Brain microvascular endothelial cell (primary cell): ENCODE measurements at regions of chr2 and their contacts with region 1.

Region 1: DNA sequence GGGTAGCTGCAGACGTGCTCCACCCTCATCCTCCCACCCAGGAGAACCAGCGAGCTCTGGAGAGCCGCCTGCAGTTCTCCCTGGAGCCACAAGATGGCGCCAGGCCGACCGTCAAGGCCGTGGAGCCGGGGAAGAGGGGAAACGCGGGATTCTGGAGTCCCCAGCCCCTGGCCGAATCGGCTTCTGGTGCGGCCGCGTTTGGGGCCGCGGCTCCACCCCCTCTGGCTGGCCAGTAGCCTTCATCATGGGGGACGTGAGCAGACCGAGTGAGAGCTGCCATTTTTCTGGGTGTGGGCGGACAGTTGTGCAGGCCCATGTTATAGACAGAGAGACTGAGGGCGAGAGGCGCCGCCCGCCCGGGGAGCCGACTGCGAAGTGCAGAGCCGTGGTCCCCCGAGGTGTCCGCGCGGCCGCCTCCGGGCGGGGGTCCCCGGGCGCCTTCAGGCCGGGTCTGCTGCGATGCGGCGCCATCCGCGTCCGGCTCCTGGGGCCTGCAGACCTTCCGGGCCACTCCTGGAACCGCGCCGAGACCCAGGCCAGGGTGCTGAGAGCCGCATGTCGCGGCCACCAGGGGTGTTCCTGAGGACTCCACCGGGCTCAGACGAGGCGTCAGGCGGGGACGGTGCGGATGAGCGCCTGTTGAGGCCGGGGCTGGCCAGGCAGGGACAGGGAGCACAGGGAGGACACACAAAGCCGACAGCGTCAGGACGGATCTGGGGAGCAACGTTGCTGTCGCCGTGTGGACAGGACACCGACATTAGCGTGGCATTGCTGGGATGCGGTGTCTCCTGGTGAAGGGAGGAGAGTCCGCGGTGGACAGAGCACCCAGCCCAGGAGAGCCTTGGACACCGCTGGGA is 418.2 kb upstream of the HS6ST1 start:
- DNase-seq: peak; percentile 72
- H3K4me3 ChIP-seq: peak overlapping the region; percentile 41
- H3K27ac ChIP-seq: peak overlapping the region; percentile 10
- H3K27me3 ChIP-seq: no peaks in the 10 kb centered on the region
- CTCF ChIP-seq: peak; percentile 100

Region 2: DNA sequence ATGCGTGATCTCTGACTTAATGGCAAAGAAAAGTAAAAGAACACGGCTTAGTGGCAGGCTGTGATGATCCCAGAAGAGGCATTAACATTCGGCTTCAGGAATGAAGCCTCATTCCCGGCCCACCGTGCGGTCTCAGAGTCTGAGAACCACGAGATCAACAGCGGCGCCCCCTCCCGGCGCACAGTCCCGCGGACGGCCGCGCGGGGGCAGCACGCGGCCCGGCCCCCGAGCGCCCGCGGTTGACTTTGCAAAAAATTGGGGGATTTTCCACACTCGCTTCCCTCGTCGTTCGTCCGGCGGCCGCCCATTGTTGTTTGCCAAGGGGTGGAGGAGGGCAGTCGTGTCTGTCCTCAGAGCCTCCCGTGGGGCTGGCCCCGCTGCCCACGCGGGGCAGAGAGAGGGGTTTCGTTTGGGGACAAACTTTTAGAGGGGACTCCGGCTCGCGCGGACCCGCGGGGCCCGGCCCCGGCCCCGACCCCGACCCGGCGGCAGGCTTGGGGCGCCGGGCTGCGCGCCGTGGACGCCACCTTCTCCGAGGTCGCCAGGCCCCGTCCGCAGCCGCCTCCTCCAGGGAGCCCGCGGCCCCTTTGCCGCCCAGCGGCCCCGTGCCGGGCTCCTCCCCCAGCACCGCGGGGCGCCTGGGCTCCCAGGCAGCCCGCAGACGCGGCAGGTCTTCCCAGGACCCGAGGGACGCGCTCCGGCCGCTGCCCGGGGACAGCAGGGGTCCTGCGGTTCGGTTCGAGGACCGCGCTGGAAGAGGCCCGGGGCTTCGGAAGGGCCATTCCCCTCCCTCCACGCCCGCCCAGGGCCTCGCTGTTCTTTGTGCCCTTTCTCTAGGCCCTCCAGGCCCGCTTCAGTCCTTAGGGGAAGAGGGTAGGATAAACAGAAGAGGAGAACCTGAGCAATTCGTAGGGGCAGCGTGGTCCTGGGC is 414.9 kb before region 1 on chr2:
- in situ Hi-C with region 1: loop called (anchors 25 kb)
- DNase-seq: peak; percentile 70
- H3K4me3 ChIP-seq: peak overlapping the region; percentile 61
- H3K27ac ChIP-seq: peak overlapping the region; percentile 64
- H3K27me3 ChIP-seq: no peaks in the 10 kb centered on the region
- CTCF ChIP-seq: peak; percentile 62